ENCODE measurements at regions of chr18 and their contacts with region 1.

Region 1: DNA sequence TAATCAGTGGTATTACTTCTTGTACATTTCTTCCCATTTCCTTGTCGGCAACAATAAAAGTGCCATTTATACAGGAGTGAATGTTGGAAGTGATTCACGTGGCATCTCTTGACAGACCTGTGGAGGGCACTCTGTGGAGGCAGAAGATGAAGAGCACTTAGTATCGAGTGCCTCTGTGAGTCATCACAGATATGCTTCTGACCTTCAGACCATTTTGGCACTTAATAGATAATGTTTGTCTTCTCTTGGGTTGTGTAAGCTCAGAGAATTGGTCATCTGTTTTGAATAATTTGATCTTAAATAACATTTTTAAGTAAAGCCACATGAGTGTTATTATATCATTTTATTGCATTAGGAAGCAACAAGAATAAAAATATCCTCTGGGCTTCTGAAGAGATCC is 305.5 kb downstream of the PTPRM start:
- DNase-seq: no peak
- ATAC-seq: peak; percentile 79 to 90 (median 83)
- H3K4me3 ChIP-seq: no peak overlapping the region
- H3K27ac ChIP-seq: no peak overlapping the region
- H3K4me1 ChIP-seq: peaks cover 35% of the 10 kb centered on the region
- H3K27me3 ChIP-seq: no peaks in the 10 kb centered on the region
- CTCF ChIP-seq: peak; percentile 27

Region 2: DNA sequence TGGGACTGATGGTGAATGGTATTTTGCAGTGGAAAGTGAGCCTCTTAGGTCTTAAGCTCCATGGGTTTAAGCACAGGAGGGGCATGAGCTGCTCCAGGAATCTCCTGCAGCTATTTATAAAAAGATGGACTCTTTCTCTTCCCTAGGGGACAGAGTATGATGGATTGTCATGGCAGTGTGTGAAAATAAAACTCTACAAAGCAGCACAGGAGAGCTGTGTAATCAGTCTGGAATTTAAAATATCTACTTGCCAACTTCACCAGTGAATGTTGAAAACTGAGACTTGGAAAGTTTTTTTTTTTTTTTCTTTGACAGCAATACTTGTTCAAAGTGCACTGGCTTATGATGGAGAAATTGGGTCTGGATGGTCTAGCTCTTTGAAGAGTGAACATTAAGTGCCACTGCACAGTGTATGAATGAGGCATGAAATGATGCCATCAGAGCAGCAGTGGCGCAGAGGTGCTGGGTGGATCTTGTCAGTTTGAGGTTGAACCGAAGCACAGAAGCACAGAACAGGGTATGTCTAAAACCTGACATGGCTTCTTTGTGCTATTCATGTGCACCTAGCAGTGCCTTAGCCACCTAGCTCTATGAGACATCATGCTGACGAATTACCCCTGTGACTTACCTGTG is 60.0 kb before region 1 on chr18:
- intact Hi-C with region 1: no loop called
- DNase-seq: no peak
- ATAC-seq: peak; percentile 72 to 87 (median 81)
- H3K4me3 ChIP-seq: no peak overlapping the region
- H3K27ac ChIP-seq: peak overlapping the region; percentile 68
- H3K4me1 ChIP-seq: peaks cover 35% of the 10 kb centered on the region
- H3K27me3 ChIP-seq: no peaks in the 10 kb centered on the region
- CTCF ChIP-seq: no peak

Region 3: GRCh38 chr18:7926526-7926925 is 54.0 kb after region 1 on chr18:
- intact Hi-C with region 1: loop called in 1 of 2 experiments (anchors 5 kb)
- DNase-seq: no peak
- ATAC-seq: peak; percentile 79 to 89 (median 86)
- H3K4me3 ChIP-seq: no peak overlapping the region
- H3K27ac ChIP-seq: no peak overlapping the region
- H3K4me1 ChIP-seq: peaks cover 25% of the 10 kb centered on the region
- H3K27me3 ChIP-seq: no peaks in the 10 kb centered on the region
- CTCF ChIP-seq: peak; percentile 60

Measured in psoas muscle (tissue), 8 donors.